Gastrocnemius medialis (tissue), 4 donors: ENCODE measurements at regions of chr6 and their contacts with region 1.

Region 1: DNA sequence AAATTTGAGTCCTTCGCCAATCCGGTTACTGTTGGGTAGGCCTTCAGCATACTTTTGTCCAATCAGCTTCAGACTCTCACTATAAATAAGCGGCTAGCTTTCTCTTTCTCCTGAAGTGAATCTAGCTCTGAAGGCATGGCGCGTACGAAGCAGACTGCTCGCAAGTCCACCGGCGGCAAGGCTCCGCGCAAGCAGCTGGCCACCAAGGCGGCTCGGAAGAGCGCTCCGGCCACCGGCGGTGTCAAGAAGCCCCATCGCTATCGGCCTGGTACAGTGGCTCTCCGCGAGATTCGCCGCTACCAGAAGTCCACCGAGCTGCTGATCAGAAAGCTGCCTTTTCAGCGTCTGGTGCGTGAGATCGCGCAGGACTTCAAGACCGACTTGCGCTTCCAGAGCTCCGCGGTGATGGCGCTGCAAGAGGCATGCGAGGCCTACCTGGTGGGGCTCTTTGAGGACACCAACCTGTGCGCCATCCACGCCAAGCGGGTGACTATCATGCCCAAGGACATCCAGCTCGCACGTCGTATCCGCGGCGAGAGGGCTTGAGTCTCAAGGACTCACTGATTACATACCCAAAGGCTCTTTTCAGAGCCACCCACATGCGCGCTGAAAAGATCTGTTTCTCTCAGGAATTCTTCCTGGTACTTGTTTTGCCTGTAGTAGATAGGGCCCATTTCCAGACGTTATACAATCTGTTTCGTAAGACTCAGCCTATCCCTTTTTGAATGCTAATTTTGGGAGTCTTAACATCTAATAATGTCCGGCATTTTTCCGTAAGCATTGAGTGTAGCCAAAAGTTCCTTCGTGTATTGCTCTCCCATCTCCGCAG is 102.0 kb downstream of the OR2B2 start:
- DNase-seq: peak; percentile 26 to 33
- ATAC-seq: peak; percentile 74 to 78
- H3K4me3 ChIP-seq: peak overlapping the region; percentile 51 to 67 (median 60)
- H3K27ac ChIP-seq: peak overlapping the region in 3 of 4 donors; percentile 41 to 68 (median 55)
- H3K4me1 ChIP-seq: peaks cover 3 to 17% of the 10 kb centered on the region in 2 donors
- H3K27me3 ChIP-seq: peaks cover 75 to 96% (median 83%) of the 10 kb centered on the region in 3 donors
- CTCF ChIP-seq: no peak
- POLR2A ChIP-seq: peak; percentile 58 to 76

Region 2: DNA sequence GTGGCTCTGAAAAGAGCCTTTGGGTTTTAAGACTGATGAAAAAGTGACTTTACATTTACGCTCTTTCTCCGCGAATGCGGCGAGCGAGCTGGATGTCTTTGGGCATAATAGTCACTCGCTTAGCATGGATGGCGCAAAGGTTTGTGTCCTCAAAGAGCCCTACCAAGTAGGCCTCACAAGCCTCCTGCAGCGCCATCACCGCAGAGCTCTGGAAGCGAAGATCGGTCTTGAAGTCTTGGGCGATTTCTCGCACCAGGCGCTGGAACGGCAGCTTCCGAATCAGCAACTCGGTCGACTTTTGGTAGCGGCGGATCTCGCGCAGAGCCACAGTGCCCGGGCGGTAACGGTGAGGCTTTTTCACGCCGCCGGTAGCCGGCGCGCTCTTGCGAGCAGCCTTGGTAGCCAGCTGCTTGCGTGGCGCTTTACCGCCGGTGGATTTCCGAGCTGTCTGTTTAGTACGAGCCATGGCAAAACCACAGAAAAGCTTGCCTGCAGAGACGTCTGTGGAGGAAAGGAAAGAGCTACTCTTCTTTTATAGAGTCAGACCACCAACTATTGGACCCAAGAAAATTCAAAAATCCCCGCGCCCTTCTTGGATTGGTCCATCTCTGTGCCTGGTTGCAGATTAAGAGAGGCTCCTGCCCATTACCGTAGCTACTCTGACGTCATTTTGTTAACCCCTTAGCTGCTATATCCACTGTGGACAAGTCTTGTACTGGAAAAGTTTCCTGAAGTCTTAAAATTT is 1778.4 kb before region 1 on chr6:
- in situ Hi-C with region 1: no loop called
- intact Hi-C with region 1: loop called (anchors 10 kb)
- DNase-seq: peak; percentile 61 to 66
- ATAC-seq: peak; percentile 72 to 79
- H3K4me3 ChIP-seq: peak overlapping the region; percentile 48 to 57 (median 54)
- H3K27ac ChIP-seq: peak overlapping the region in 1 of 4 donors; percentile 17
- H3K4me1 ChIP-seq: peaks cover 14 to 19% of the 10 kb centered on the region in 2 donors
- H3K27me3 ChIP-seq: peaks cover 26 to 87% (median 33%) of the 10 kb centered on the region in 3 donors
- CTCF ChIP-seq: no peak
- POLR2A ChIP-seq: no peak

Region 3: GRCh38 chr6:26196846-26197648 is 1613.1 kb before region 1 on chr6:
- in situ Hi-C with region 1: loop called in 1 of 4 experiments (anchors 25 kb)
- intact Hi-C with region 1: no loop called
- DNase-seq: peak in 1 of 2 donors; percentile 40
- ATAC-seq: peak; percentile 44 to 45
- H3K4me3 ChIP-seq: peak overlapping the region; percentile 37 to 56 (median 38)
- H3K27ac ChIP-seq: peak overlapping the region; percentile 24 to 62 (median 48)
- H3K4me1 ChIP-seq: peaks cover 3 to 5% of the 10 kb centered on the region in 2 donors
- H3K27me3 ChIP-seq: peaks cover 86 to 99% (median 92%) of the 10 kb centered on the region in 3 donors
- CTCF ChIP-seq: no peak
- POLR2A ChIP-seq: peak in 1 of 2 donors; percentile 47

Region 4: GRCh38 chr6:27706431-27706830 is 103.7 kb before region 1 on chr6:
- in situ Hi-C with region 1: no loop called
- intact Hi-C with region 1: no loop called
- DNase-seq: no peak
- ATAC-seq: no peak
- H3K4me3 ChIP-seq: no peak overlapping the region
- H3K27ac ChIP-seq: no peak overlapping the region
- H3K4me1 ChIP-seq: no peaks in the 10 kb centered on the region
- H3K27me3 ChIP-seq: no peaks in the 10 kb centered on the region
- CTCF ChIP-seq: no peak
- POLR2A ChIP-seq: no peak